T-cell (primary cell): ENCODE measurements at regions of chr9 and their contacts with region 1.

Region 1: GRCh38 chr9:107340920-107341632 is 58.0 kb downstream of the RAD23B start:
- DNase-seq: peak; percentile 36 to 86 (median 72)
- ATAC-seq: peak; percentile 71 to 81 (median 76)
- H3K4me3 ChIP-seq: no peak overlapping the region
- H3K4me3 Mint-ChIP-seq: peak overlapping the region in 1 of 3 donors; percentile 15
- H3K27ac ChIP-seq: no peak overlapping the region
- H3K27ac Mint-ChIP-seq: no peak overlapping the region
- H3K4me1 ChIP-seq: peaks cover 7% of the 10 kb centered on the region in 2 experiments
- H3K4me1 Mint-ChIP-seq: peaks cover 9 to 16% (median 11%) of the 10 kb centered on the region in 3 donors
- H3K27me3 ChIP-seq: no peaks in the 10 kb centered on the region
- H3K27me3 Mint-ChIP-seq: peaks cover 0 to 2% of the 10 kb centered on the region in 2 donors

Region 2: GRCh38 chr9:106981396-106982287 is 359.4 kb before region 1 on chr9:
- CTCF ChIA-PET with region 1: no interaction called
- POLR2A ChIA-PET with region 1: interaction called in 1 of 2 experiments, 10 read pairs
- DNase-seq: no peak
- ATAC-seq: no peak
- H3K4me3 ChIP-seq: no peak overlapping the region
- H3K4me3 Mint-ChIP-seq: no peak overlapping the region
- H3K27ac ChIP-seq: no peak overlapping the region
- H3K27ac Mint-ChIP-seq: no peak overlapping the region
- H3K4me1 ChIP-seq: no peaks in the 10 kb centered on the region
- H3K4me1 Mint-ChIP-seq: no peaks in the 10 kb centered on the region
- H3K27me3 ChIP-seq: no peaks in the 10 kb centered on the region
- H3K27me3 Mint-ChIP-seq: no peaks in the 10 kb centered on the region

Region 3: DNA sequence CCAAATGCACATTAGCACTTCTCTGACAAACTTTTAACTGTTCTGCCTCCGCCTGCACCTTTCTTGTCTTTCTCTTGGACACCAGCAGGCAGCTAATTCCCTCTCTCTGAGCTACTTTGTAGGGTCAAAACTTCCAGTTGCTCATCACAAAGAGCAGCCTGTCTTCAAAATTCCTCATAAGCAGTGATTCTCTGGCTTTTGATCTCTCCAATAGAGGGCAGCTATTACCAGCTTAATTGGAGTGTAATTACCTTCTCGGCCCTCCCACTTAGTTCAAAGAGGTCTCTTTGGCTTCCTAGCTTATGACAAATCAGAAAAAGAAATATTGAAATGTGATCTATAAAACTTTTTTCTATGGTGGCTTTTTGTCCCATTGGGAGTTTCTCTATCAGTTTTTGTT is 101.6 kb before region 1 on chr9:
- CTCF ChIA-PET with region 1: interaction called, 6 to 40 read pairs
- POLR2A ChIA-PET with region 1: no interaction called
- DNase-seq: peak in 1 of 35 experiments; percentile 50
- ATAC-seq: peak in 1 of 4 experiments; percentile 45
- H3K4me3 ChIP-seq: no peak overlapping the region
- H3K4me3 Mint-ChIP-seq: no peak overlapping the region
- H3K27ac ChIP-seq: no peak overlapping the region
- H3K27ac Mint-ChIP-seq: no peak overlapping the region
- H3K4me1 ChIP-seq: no peaks in the 10 kb centered on the region
- H3K4me1 Mint-ChIP-seq: peaks cover 11 to 13% (median 13%) of the 10 kb centered on the region in 3 donors
- H3K27me3 ChIP-seq: no peaks in the 10 kb centered on the region
- H3K27me3 Mint-ChIP-seq: peaks cover 0 to 12% of the 10 kb centered on the region in 2 donors

Region 4: GRCh38 chr9:107251756-107252322 is 89.2 kb before region 1 on chr9:
- CTCF ChIA-PET with region 1: no interaction called
- POLR2A ChIA-PET with region 1: no interaction called
- DNase-seq: no peak
- ATAC-seq: no peak
- H3K4me3 ChIP-seq: no peak overlapping the region
- H3K4me3 Mint-ChIP-seq: no peak overlapping the region
- H3K27ac ChIP-seq: no peak overlapping the region
- H3K27ac Mint-ChIP-seq: no peak overlapping the region
- H3K4me1 ChIP-seq: peaks cover 0 to 1% of the 10 kb centered on the region in 2 experiments
- H3K4me1 Mint-ChIP-seq: peaks cover 0 to 1% (median 1%) of the 10 kb centered on the region in 3 donors
- H3K27me3 ChIP-seq: no peaks in the 10 kb centered on the region
- H3K27me3 Mint-ChIP-seq: peaks cover 6 to 11% of the 10 kb centered on the region in 2 donors

Region 5: DNA sequence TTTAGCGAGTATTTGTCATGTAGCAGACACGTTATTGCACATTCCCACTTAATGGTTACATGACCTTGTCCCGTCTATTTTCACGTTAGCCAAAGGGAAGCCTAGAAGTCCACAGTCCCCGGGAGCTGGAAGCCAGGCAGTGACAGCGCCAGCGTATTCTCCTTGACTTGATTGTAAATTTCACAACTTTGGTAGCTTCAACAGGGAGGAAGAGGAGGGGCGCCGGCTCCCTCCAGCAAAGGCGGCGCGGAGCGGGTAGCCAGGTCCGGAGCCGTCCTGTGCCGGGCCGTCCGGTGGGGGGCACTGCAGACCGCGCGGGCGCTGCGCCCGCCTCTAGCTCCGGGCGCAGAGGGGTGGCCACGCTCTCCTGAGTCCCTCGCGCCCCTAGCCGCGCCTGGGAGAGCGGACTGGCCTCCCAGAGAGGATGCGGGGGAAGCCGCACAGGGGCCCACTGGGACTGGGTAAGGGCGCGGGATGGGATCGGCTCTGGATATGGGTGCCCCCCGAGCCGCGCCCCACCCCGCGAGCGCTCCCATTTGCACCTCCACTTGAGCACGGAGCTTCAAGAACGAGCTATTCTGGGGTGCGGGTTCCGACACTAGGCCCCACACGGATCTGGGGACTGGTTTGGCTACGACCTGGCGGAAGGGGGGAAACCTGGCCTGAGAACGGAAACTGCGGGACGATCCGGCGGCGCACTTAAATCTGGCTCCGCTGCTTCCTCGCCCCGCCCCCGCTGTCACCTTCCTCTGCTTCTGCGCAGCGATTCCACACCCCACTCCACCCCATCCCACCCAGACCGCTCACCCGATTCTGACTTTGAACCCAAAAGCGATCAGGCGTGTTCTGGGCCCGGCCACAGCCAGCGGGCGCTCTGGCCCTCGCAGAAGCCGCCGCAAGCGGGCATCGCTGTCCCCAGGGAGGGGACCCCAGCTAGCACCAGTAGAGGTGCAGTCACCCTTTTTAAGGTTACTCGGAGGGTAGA is 124.7 kb after region 1 on chr9:
- CTCF ChIA-PET with region 1: no interaction called
- POLR2A ChIA-PET with region 1: no interaction called
- DNase-seq: peak in 2 of 35 experiments; percentile 3 to 21
- ATAC-seq: peak in 2 of 4 experiments; percentile 24 to 27
- H3K4me3 ChIP-seq: peak overlapping the region in 1 of 2 donors; percentile 11
- H3K4me3 Mint-ChIP-seq: peak overlapping the region in 2 of 3 donors; percentile 54 to 56
- H3K27ac ChIP-seq: no peak overlapping the region
- H3K27ac Mint-ChIP-seq: no peak overlapping the region
- H3K4me1 ChIP-seq: peaks cover 0 to 10% of the 10 kb centered on the region in 2 experiments
- H3K4me1 Mint-ChIP-seq: peaks cover 4 to 9% (median 5%) of the 10 kb centered on the region in 3 donors
- H3K27me3 ChIP-seq: peaks cover 10 to 31% of the 10 kb centered on the region in 2 experiments
- H3K27me3 Mint-ChIP-seq: peaks cover 44 to 53% of the 10 kb centered on the region in 2 donors

Region 6: DNA sequence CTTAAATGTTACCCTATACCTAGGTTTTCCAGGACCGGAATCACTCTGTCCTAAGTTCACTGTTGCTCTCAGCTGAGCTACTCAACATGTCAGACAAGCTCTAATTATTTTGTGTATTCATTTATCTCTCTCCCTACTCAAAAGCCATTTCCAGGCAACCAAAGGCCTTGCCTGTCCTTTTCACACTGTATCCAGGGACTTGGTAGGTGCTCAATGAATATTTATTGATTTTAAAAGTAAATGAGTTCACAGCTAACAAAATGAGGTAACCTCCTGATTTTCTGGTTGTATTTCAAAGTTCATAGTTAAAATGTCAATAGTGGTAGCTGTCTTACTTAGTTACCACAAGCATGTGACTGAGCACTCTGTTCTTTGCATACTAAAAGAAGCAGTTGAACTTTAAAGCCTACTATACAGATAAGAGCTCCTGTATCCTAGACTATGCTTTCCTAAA is 992.5 kb after region 1 on chr9:
- CTCF ChIA-PET with region 1: no interaction called
- POLR2A ChIA-PET with region 1: no interaction called
- DNase-seq: no peak
- ATAC-seq: no peak
- H3K4me3 ChIP-seq: no peak overlapping the region
- H3K4me3 Mint-ChIP-seq: no peak overlapping the region
- H3K27ac ChIP-seq: no peak overlapping the region
- H3K27ac Mint-ChIP-seq: no peak overlapping the region
- H3K4me1 ChIP-seq: no peaks in the 10 kb centered on the region
- H3K4me1 Mint-ChIP-seq: no peaks in the 10 kb centered on the region
- H3K27me3 ChIP-seq: no peaks in the 10 kb centered on the region
- H3K27me3 Mint-ChIP-seq: no peaks in the 10 kb centered on the region